ENCODE measurements at regions of chr1 and their contacts with region 1.

Region 1: GRCh38 chr1:200372080-200372884 is 37.6 kb downstream of the ZNF281 start:
- DNase-seq: no peak
- H3K4me3 ChIP-seq: peak overlapping the region; percentile 70
- H3K27ac ChIP-seq: no peak overlapping the region
- H3K4me1 ChIP-seq: peaks cover 72% of the 10 kb centered on the region
- CTCF ChIP-seq: no peak

Region 2: GRCh38 chr1:200154069-200154767 is 218.1 kb before region 1 on chr1:
- CTCF ChIA-PET with region 1: no interaction called
- POLR2A ChIA-PET with region 1: no interaction called
- intact Hi-C with region 1: loop called (anchors 10 kb)
- DNase-seq: peak; percentile 93
- H3K4me3 ChIP-seq: peak overlapping the region; percentile 41
- H3K27ac ChIP-seq: peak overlapping the region; percentile 89
- H3K4me1 ChIP-seq: peaks cover 56% of the 10 kb centered on the region
- CTCF ChIP-seq: no peak

Region 3: DNA sequence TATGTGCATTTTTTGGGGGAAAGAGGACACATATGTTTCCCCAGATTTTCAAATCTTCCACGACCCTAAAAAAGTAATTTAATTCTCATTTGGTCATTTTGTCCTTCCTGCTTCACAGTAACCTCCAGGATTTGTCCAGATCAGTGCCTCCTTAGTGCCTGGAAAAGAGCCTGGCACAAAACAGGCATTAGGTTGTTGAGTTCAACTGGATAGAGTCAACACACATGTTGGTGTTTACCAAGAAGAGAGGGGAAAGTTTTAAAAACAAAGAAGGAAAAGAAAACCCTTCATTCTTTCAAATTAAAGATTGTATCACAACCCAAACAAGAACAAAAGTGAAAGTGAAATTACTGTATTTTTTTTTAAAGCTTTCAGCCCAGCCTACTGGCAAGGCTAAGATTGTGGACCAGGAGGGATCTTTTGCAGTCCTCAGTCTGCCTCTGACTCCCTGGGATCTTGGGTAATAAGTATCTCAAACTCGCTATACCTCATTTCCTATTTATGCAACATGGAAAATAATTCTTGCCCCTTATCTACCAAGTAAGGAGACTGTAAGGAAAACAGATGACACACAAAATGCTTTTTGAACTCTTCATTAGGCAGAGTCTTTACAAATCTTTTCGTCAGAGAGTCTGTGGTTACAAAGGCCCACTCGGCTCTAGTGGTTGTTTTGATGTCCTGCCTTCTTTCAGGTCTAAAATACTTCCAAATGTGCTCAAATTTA is 20.3 kb before region 1 on chr1:
- CTCF ChIA-PET with region 1: interaction called, 4 read pairs
- POLR2A ChIA-PET with region 1: interaction called, 12 read pairs
- intact Hi-C with region 1: no loop called
- DNase-seq: peak; percentile 16
- H3K4me3 ChIP-seq: peak overlapping the region; percentile 11
- H3K27ac ChIP-seq: no peak overlapping the region
- H3K4me1 ChIP-seq: peaks cover 18% of the 10 kb centered on the region
- CTCF ChIP-seq: no peak

Region 4: GRCh38 chr1:200384818-200385390 is 12.6 kb after region 1 on chr1:
- CTCF ChIA-PET with region 1: no interaction called
- POLR2A ChIA-PET with region 1: interaction called, 32 read pairs
- intact Hi-C with region 1: no loop called
- DNase-seq: no peak
- H3K4me3 ChIP-seq: no peak overlapping the region
- H3K27ac ChIP-seq: no peak overlapping the region
- H3K4me1 ChIP-seq: peaks cover 58% of the 10 kb centered on the region
- CTCF ChIP-seq: no peak